HEK293T (cell line): ENCODE measurements at regions of chr15 and their contacts with region 1.

Region 1: GRCh38 chr15:70810916-70811578 is 42.9 kb downstream of the LARP6 start:
- DNase-seq: no peak

Region 2: GRCh38 chr15:70679919-70680231 is 131.2 kb before region 1 on chr15:
- CTCF ChIA-PET with region 1: interaction called, 16 read pairs
- POLR2A ChIA-PET with region 1: no interaction called
- DNase-seq: no peak

Region 3: GRCh38 chr15:71103102-71103676 is 292.1 kb after region 1 on chr15:
- CTCF ChIA-PET with region 1: no interaction called
- POLR2A ChIA-PET with region 1: no interaction called
- DNase-seq: peak; percentile 56